ENCODE measurements at regions of chr15 and their contacts with region 1.

Region 1: DNA sequence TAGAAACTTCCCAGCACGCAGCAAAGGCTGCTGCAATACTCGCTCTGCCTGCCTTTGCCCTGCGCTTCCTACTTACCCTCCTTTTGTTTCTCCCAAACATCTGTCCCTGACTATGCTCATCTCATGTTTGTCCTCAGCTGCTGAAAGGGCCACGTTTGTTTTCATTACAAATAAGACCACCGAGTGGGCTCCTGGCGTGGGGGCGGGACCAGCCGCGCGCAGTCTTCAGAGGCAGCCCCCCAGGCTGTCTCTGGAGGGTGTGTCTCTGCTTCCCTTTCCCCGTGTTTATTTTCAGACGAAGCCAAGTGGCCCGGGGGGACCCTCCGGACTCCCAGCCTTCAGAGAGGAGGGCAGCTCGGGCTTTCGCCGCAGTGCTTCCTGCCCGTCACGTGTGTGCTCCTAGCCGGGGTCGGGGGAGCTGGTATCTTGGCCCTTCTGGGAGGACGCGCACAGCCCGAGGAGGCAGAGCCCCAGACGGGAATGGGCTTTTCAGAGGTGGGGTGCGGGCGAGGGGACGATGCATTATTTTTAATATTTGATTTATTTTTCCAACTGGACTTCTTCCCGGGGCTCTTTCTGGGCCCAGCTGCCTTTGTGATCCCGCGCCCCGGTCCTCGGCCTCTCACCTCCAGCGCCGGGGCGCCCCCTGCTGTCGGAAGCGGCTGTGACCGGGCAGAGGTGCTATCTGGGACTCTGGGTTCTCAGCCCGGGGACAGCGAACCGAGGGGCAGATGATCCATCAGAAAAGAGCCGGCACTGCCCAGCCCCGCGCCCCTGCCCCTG is 70.0 kb upstream of the CGNL1 start:
- DNase-seq: peak; percentile 75 to 100
- H3K4me3 ChIP-seq: peak overlapping the region; percentile 33 to 69 (median 60)
- H3K27ac ChIP-seq: peak overlapping the region; percentile 49; the same call in 1 of the 2 replicates
- H3K4me1 ChIP-seq: peaks cover 5 to 14% (median 10%) of the 10 kb centered on the region in 4 experiments
- H3K27me3 ChIP-seq: no peaks in the 10 kb centered on the region
- CTCF ChIP-seq: peak; percentile 75 to 86 (median 82)
- EP300 ChIP-seq: no peak
- POLR2A ChIP-seq: peak in 1 of 2 experiments; percentile 65; a peak in 2 of 3 replicates
- RAD21 ChIP-seq: peak; percentile 84 to 90

Region 2: DNA sequence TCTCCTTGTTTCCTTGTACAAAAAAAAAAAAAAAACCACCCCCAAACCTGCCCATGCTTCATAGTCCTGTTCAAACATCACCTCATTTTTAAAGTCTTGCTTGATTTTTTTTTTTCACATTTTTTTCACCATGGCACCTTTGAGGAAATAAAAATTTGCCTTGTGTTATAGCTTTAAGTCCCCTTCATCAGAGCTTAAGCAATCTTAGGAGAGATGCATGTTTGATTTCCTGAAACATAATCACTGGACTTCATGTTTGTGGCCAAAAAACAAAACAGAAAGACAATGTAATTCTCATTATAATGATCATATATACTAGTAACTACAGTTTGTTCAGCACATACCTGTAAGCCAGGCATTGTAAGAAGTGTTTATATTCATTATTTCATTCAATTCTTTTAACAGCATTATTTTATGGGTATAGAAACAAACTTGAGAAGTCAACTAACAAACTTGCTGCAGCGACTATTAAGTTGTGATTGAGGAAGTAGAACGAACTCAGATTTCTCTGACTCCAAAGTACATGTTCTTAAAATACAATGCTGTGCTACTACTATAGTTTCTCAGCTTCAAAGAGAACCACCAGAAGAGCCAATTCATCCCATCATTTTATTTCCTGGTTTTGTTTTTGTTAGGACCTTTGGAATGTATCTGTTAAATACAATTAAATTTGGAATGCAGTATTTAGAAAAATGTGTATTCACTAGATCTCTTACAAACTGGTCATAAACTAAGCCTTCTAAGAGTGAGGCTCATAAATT is 184.1 kb before region 1 on chr15:
- CTCF ChIA-PET with region 1: no interaction called
- POLR2A ChIA-PET with region 1: no interaction called
- DNase-seq: no peak
- H3K4me3 ChIP-seq: no peak overlapping the region
- H3K27ac ChIP-seq: no peak overlapping the region
- H3K4me1 ChIP-seq: peaks cover 0 to 7% (median 0%) of the 10 kb centered on the region in 4 experiments; a peak in 1 of 7 replicates
- H3K27me3 ChIP-seq: no peaks in the 10 kb centered on the region
- CTCF ChIP-seq: no peak
- EP300 ChIP-seq: no peak
- POLR2A ChIP-seq: no peak
- RAD21 ChIP-seq: no peak

Region 3: GRCh38 chr15:57198654-57199291 is 107.6 kb before region 1 on chr15:
- CTCF ChIA-PET with region 1: interaction called, 10 read pairs
- POLR2A ChIA-PET with region 1: no interaction called
- DNase-seq: peak in 1 of 2 experiments; percentile 74
- H3K4me3 ChIP-seq: peak overlapping the region in 1 of 4 experiments; percentile 47; a peak in 4 of 8 replicates
- H3K27ac ChIP-seq: peak overlapping the region; percentile 74
- H3K4me1 ChIP-seq: peaks cover 0 to 19% (median 7%) of the 10 kb centered on the region in 4 experiments; a peak in 4 of 7 replicates
- H3K27me3 ChIP-seq: no peaks in the 10 kb centered on the region
- CTCF ChIP-seq: no peak
- EP300 ChIP-seq: peak in 1 of 2 experiments; percentile 44; a peak in 1 of 3 replicates
- POLR2A ChIP-seq: no peak
- RAD21 ChIP-seq: no peak

Region 4: DNA sequence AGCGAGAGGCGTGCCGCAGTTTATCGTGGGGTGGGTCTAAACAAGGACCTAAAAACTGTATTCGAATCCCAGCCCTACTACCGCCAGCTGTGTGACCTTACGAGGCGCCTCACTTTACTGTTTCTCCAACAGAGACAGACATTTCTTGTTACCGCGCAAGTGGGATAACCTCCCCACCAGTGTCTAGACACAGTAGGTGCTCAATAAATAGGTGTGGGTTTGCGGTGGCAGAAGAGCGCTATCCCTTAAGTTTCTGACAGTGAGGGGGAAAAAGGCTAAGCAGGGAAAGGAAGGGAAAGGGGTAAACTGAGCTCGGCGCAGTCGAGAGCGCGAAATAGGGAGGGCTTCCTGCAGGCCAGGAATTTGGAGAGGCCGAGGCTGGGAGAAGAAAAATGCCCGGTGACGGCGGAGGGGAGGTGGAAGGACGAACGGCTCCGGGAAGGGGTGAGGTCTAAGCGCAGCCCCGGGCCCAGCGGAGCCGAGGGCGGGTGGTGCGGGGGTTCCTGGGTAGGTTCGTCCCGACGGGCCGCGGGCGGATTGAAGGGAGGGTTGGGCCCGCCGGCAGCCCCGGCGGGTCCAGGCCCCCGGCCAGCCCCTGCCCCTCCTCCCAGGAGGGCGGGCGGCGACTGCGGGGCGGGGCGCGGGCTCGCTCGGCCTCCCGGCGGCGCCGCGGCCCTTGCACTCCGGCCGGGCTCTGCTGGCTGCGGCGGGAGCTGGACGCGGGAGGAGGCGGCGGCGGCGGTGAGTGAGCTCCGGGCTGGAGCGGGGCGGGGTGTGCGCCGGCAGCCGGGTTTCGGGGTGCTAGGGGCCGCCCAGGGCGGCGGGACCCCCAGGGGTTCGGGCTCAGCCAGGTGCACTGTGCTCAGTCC is 69.7 kb after region 1 on chr15 and contains the start of gene CGNL1:
- CTCF ChIA-PET with region 1: no interaction called
- POLR2A ChIA-PET with region 1: no interaction called
- DNase-seq: peak in 1 of 2 experiments; percentile 77
- H3K4me3 ChIP-seq: peak within 1 kb of the TSS; percentile 59 to 66 (median 64)
- H3K27ac ChIP-seq: no peak within 1 kb of the TSS
- H3K4me1 ChIP-seq: peaks cover 10 to 23% (median 18%) of the 10 kb centered on the region in 4 experiments; a peak in 6 of 7 replicates
- H3K27me3 ChIP-seq: peaks cover 0 to 10% (median 5%) of the 10 kb centered on the region in 4 experiments; a peak in 4 of 7 replicates
- CTCF ChIP-seq: no peak
- EP300 ChIP-seq: no peak
- POLR2A ChIP-seq: no peak; a peak in 1 of 3 replicates
- RAD21 ChIP-seq: no peak
- total RNA-seq, gene CGNL1: 72.7 and 75.6 TPM in 2 replicates

Measured in H1 (cell line).